ENCODE measurements at regions of chr7 and their contacts with region 1.

Region 1: DNA sequence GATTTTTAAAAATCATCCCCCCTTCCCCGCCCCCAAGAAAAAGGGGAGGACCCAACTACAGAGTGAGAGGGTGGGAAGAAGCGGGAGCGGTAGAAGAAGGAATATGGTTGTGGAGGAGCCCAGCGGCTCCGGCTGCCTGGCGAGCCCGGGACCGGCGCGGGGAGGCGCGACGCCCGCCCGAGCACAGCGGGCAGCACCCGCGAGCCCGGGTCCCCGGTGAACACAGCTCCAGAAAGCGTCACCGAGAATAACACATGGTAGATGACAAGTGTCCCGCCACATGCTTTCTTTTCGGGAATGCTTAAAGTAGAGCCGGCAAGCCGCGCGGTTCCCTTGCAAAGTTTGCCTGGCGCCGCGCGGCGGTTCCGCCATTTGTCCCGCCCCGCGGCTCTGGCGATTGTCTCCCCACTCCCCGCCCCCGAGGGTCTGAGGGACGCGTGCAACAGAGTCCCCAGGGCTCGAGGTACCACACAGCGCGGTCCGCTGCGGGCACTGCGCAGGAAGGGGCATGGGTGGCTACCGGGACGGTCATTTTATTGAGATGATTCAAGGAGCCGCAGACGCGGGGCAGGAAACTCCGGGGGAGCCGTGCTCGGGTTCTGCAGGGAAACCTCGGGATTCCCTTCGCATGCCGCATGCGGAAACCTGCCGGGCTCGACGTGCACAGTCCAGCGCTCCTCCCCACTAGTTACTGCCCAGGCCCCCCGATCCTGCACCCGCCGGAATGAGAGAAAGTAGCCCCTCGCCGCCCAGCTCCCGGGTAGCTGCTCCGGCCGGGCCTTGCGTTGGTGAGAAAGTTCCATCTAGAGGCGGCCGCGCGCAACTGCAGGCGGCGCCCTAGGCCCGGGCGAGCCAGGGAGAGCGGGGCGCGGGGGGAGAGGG is 781 bp upstream of the GRM8 start:
- DNase-seq: peak; percentile 54
- H3K4me3 ChIP-seq: peak overlapping the region; percentile 72 to 88 (median 80)
- H3K27ac ChIP-seq: no peak overlapping the region
- H3K4me1 ChIP-seq: peaks cover 22% of the 10 kb centered on the region
- H3K27me3 ChIP-seq: peaks cover 27% of the 10 kb centered on the region
- CTCF ChIP-seq: peak; percentile 65 to 93

Region 2: DNA sequence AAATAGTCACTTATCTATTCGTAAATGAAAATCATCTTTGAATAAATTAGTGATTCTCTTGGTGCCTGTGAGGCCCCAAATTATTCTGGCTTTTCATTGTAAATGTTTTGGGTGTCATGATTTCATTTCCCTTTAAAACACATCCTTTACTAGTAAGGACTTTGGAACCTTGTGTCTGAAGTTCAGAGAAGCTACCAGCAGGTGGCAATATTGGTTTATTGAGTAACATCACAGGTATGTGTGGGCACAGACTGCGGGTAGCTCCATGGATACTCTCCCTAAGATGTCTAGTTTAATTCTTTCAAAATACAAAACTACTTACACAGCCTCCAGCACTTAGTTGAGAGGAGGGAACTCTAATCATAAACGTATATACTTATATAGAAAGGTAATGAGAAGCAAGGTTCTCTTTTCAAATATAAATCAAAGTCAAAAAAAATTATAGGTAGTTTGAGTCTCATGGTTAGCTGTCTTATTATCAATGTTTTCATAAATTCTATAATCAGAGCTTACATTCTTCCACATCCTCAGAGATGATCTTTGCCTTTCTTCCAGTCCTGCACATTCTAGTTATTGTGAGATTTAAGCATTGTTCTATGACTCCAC is 450.4 kb before region 1 on chr7:
- CTCF ChIA-PET with region 1: no interaction called
- dilution Hi-C with region 1: no loop called
- in situ Hi-C with region 1: no loop called
- intact Hi-C with region 1: loop called (anchors 1 kb)
- DNase-seq: peak; percentile 59
- H3K4me3 ChIP-seq: no peak overlapping the region
- H3K27ac ChIP-seq: no peak overlapping the region
- H3K4me1 ChIP-seq: peaks cover 3% of the 10 kb centered on the region
- H3K27me3 ChIP-seq: no peaks in the 10 kb centered on the region
- CTCF ChIP-seq: peak; percentile 53 to 80

Region 3: DNA sequence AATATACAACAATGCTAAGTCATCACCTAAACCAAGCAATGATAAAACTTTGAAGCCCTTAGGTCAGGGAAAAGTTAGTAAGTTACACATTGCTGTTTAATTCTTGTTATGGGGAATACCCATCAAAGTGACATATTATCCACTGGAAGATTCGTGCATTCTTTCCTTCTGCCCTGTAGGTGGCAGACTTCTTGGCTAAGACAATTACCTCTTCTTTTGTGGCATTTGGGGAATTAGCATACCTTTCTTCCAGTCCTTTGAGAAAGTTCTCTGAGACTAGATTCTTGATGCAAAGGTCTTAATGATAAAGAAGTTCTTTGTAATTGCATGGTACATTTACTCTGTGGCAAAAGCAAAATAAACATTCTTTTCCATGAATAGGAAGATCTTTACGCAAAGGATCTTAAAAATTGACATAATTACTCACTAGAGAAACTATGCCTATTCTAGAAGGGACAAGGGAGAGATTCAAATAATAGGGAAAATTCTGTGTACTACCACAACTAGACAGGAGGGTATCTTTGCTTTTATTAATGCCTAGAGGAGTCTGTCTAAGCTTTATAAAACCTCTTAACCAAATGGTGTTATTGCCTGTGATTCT is 396.7 kb before region 1 on chr7:
- CTCF ChIA-PET with region 1: no interaction called
- dilution Hi-C with region 1: no loop called
- in situ Hi-C with region 1: no loop called
- intact Hi-C with region 1: loop called (anchors 1 kb)
- DNase-seq: peak; percentile 16
- H3K4me3 ChIP-seq: no peak overlapping the region
- H3K27ac ChIP-seq: no peak overlapping the region
- H3K4me1 ChIP-seq: no peaks in the 10 kb centered on the region
- H3K27me3 ChIP-seq: peaks cover 6% of the 10 kb centered on the region
- CTCF ChIP-seq: peak; percentile 71 to 80

Region 4: GRCh38 chr7:127107601-127108007 is 145.9 kb before region 1 on chr7:
- CTCF ChIA-PET with region 1: no interaction called
- dilution Hi-C with region 1: no loop called
- in situ Hi-C with region 1: no loop called
- intact Hi-C with region 1: loop called (anchors 1 kb)
- DNase-seq: peak; percentile 59
- H3K4me3 ChIP-seq: no peak overlapping the region
- H3K27ac ChIP-seq: no peak overlapping the region
- H3K4me1 ChIP-seq: no peaks in the 10 kb centered on the region
- H3K27me3 ChIP-seq: no peaks in the 10 kb centered on the region
- CTCF ChIP-seq: peak; percentile 61 to 62

Region 5: DNA sequence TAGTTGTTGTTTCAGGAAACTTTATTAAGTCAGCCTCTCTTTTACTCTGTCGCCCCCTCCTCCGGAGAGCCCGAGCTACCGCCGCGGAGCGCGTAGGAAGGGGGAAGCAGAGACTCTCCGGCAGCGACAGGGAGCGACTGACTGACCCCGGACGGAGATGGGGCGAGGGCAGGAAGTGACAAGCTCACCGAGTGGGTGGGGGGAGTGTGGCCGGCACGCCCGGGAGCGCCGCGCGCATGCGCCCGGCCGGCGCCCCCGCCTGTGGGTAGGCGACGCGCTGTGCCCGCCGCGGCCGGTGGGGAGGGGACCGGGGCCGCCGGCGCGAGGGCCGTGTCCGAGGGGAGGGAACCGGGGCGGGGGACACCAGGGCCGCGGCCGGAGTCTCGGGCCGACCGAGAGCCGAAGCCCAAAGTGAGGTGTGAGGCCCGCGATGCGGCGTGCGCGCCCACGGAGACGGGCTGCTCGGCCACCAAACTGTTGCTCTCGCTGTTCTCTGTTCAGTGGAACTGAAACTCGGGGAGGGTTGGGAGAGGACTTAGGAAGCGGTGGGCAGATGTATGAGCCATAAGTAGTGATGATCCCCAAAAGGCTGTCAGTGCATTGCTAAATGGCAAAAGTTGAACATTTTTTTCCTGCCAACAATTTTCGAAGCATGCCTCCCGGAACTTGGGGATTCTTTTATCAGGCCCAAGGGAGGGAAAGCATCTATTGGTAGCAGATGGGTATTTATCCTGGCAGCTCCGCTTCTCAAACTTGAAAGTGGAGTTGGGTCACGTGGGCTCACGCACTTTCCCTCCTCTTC is 139.2 kb after region 1 on chr7 and contains the start of gene ZNF800:
- CTCF ChIA-PET with region 1: no interaction called
- dilution Hi-C with region 1: no loop called
- in situ Hi-C with region 1: no loop called
- intact Hi-C with region 1: loop called (anchors 5 kb)
- DNase-seq: peak; percentile 75
- H3K4me3 ChIP-seq: peak within 1 kb of the TSS; percentile 71 to 99 (median 86)
- H3K27ac ChIP-seq: peak within 1 kb of the TSS; percentile 85
- H3K4me1 ChIP-seq: peaks cover 13% of the 10 kb centered on the region
- H3K27me3 ChIP-seq: no peaks in the 10 kb centered on the region
- CTCF ChIP-seq: no peak
- total RNA-seq, gene ZNF800: 28.2 to 37.3 TPM

Region 6: DNA sequence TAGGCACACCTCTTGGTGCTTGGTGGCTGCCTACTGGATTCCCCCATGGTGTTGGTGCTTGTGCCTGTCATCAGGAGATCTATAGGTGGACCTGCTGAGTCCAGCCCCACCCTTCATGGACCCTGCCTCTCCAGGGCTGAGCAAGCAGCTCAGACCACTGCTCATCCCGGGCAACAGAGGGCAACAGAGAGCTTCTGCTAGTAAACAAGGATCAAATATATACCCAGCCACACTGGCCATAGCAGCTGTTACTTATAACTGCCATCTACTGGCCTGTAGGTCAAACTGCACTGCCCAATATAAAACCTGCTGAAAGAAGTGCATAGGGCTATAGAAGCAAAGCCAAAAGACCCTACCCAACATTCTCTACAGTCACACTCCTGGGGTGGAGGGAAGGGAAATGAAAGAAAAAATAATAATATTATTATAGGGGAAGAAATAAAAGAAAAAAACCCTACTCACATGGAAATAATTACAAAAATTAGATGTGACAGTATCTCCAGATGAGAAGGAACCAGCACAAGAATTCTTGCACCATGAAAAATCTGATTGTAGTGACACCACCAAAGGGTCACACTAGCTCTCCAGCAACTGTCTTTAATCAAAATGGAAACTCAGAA is 193.9 kb after region 1 on chr7:
- CTCF ChIA-PET with region 1: interaction called, 4 read pairs
- dilution Hi-C with region 1: no loop called
- in situ Hi-C with region 1: no loop called
- intact Hi-C with region 1: loop called (anchors 2 kb)
- DNase-seq: peak; percentile 44
- H3K4me3 ChIP-seq: no peak overlapping the region
- H3K27ac ChIP-seq: no peak overlapping the region
- H3K4me1 ChIP-seq: no peaks in the 10 kb centered on the region
- H3K27me3 ChIP-seq: no peaks in the 10 kb centered on the region
- CTCF ChIP-seq: peak; percentile 56 to 60

Region 7: DNA sequence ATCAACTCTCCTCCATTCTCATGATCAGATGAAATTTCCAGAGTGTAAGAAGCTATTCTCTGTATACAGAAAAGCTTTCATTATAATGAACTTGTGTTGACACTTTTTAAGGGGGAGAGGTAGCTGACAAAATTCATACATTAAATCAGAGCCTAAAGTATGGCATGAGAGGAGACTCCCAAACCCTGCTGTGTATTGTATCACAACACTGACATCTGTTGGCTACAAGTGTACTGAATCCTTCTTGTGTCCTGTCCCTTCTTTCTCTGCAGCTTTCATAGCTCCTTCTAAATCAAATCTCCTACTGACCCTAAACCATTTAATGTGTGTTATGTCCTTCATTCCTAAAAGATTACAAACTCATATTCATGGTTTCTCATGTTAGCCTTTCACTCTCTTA is 261.0 kb after region 1 on chr7:
- CTCF ChIA-PET with region 1: interaction called, 3 read pairs
- dilution Hi-C with region 1: no loop called
- in situ Hi-C with region 1: no loop called
- intact Hi-C with region 1: loop called (anchors 1 kb)
- DNase-seq: peak; percentile 11
- H3K4me3 ChIP-seq: no peak overlapping the region
- H3K27ac ChIP-seq: no peak overlapping the region
- H3K4me1 ChIP-seq: no peaks in the 10 kb centered on the region
- H3K27me3 ChIP-seq: no peaks in the 10 kb centered on the region
- CTCF ChIP-seq: peak; percentile 22 to 60